Cardiac septum (tissue), 1 donor: ENCODE measurements at regions of chrX and their contacts with region 1.

Region 1: GRCh38 chrX:111869639-111870034 is 6.3 kb upstream of the TRPC5OS start:
- DNase-seq: no peak

Region 2: GRCh38 chrX:111555406-111555958 is 314.2 kb before region 1 on chrX:
- intact Hi-C with region 1: no loop called
- DNase-seq: no peak

Region 3: GRCh38 chrX:111811831-111812230 is 57.8 kb before region 1 on chrX:
- intact Hi-C with region 1: no loop called
- DNase-seq: no peak

Region 4: GRCh38 chrX:112147206-112147605 is 277.6 kb after region 1 on chrX:
- intact Hi-C with region 1: loop called (anchors 10 kb)
- DNase-seq: no peak

Region 5: GRCh38 chrX:112678831-112679230 is 809.2 kb after region 1 on chrX:
- intact Hi-C with region 1: no loop called
- DNase-seq: no peak